PC-3 (cell line): ENCODE measurements at regions of chr19 and their contacts with region 1.

Region 1: DNA sequence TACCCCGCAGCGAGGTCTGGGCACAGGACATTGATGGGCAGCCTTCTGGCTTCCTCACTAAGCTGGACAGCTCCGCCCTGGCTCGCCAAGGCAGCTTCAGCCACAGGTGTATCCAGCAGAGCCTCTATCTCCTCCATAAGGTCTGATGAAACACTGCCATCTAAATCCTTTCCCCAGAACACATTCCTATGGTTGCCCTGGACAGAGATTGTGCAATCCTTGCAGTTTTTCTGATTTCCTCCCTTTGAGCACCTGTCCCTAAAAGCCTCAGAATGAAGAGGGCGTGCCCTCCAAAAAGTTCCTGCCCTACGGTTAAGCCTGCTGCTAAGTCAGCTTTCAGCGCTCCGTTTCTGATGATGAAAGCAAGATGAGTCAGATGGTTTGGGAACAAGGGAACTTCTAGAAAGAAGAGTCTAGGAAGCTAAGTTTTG is 21.0 kb downstream of the CLEC4M start:
- DNase-seq: peak; percentile 97
- ATAC-seq: peak; percentile 73
- H3K4me3 ChIP-seq: no peak overlapping the region
- H3K27ac ChIP-seq: no peak overlapping the region
- H3K4me1 ChIP-seq: peaks cover 10% of the 10 kb centered on the region
- H3K27me3 ChIP-seq: peaks cover 22% of the 10 kb centered on the region; the same call in 1 of the 2 replicates
- CTCF ChIP-seq: no peak

Region 2: GRCh38 chr19:7703332-7703731 is 80.7 kb before region 1 on chr19:
- CTCF ChIA-PET with region 1: no interaction called
- POLR2A ChIA-PET with region 1: interaction called, 11 read pairs
- intact Hi-C with region 1: no loop called
- DNase-seq: no peak
- ATAC-seq: no peak
- H3K4me3 ChIP-seq: no peak overlapping the region
- H3K27ac ChIP-seq: no peak overlapping the region
- H3K4me1 ChIP-seq: no peaks in the 10 kb centered on the region
- H3K27me3 ChIP-seq: peaks cover 11% of the 10 kb centered on the region
- CTCF ChIP-seq: no peak